Left cardiac atrium (tissue), 4 donors: ENCODE measurements at regions of chr5 and their contacts with region 1.

Region 1: DNA sequence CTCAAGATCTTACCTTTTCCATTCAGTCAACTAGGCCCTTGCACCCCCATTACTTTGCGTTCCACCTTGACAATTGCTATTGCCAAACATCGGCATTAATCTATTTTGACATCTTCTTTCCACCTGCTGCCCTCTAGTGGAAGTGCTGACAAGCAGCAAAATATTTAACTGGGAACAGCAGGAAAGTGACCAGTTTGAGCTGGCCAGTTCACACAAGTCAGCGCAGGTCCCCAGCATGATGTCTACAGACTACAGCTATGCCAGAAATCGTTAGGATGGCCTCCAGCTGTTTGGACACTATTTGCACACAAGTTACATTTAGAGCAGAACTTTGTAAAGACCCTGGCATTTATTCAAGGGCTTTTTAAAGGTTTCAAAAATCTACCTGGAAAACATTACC is 160.1 kb downstream of the GHR start:
- DNase-seq: peak; percentile 44
- ATAC-seq: peak; percentile 49 to 67

Region 2: DNA sequence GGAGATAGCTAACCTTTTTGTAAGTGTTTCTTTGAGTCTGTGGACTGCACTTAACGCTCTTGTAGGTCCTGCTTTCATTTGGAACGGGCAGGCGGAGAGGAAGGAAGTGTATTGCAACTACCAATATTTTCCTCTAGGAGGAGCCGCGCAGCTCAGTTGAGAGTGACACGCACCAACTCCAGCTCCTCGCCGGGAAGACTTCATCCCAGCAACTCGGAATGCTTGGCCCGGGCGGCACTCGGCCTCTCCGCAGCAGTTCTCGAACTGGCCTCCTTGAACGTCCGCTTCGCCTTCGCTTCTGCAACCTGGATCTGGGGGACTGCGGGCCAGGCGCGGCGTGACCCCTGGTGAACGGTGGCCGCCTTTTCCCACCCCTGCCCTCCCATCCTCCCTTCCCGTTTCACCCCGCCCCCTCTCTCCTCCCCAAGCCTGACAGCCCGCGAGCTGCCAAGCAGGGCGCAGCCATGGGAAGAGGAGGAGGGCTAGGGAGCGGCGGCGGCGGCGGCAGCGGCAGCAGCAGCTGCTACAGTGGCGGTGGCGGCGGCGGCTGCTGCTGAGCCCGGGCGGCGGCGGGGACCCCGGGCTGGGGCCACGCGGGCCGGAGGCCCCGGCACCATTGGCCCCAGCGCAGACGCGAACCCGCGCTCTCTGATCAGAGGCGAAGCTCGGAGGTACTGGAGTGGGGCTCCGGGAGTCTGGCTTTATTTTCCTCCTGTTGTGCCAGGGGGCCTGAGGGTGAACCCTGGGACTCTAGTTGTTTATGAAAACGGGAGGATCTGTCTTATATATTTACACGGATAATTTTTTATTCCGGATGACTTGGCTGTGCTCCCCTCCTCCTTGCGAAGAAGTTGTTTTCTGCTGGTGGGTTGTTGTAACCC is 159.8 kb before region 1 on chr5 and contains the start of gene GHR:
- intact Hi-C with region 1: loop called (anchors 2 to 5 kb)
- DNase-seq: peak; percentile 86
- ATAC-seq: peak; percentile 93 to 94
- total RNA-seq, gene GHR: 15.2 to 22.4 TPM

Region 3: DNA sequence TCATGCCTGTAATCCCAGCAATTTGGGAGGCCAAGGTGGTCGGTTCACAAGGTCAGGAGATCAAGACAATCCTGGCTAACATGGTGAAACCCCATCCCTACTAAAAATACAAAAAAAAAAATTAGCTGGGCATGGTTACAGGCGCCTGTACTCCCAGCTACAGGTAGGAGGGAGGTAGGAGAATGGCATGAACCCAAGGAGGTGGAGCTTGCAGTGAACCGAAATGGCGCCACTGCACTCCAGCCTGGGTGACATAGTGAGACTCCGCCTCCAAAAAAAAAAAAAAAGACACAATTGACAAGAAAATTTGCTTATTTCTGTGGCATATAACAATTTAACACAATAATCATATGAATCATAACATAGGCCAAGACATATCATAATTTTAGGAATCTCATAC is 502.1 kb after region 1 on chr5:
- intact Hi-C with region 1: no loop called
- DNase-seq: no peak
- ATAC-seq: no peak